ENCODE measurements at regions of chr14 and their contacts with region 1.

Region 1: GRCh38 chr14:96112032-96112431 is 72.9 kb downstream of the C14orf132 start:
- DNase-seq: no peak
- H3K4me3 ChIP-seq: no peak overlapping the region
- H3K27ac ChIP-seq: no peak overlapping the region
- H3K4me1 ChIP-seq: no peaks in the 10 kb centered on the region
- H3K27me3 ChIP-seq: no peaks in the 10 kb centered on the region
- CTCF ChIP-seq: no peak
- EP300 ChIP-seq: no peak
- POLR2A ChIP-seq: no peak

Region 2: GRCh38 chr14:96077983-96078658 is 33.9 kb before region 1 on chr14:
- intact Hi-C with region 1: loop called in 1 of 4 experiments (anchors 2 kb)
- DNase-seq: no peak
- H3K4me3 ChIP-seq: no peak overlapping the region
- H3K27ac ChIP-seq: no peak overlapping the region
- H3K4me1 ChIP-seq: no peaks in the 10 kb centered on the region
- H3K27me3 ChIP-seq: no peaks in the 10 kb centered on the region
- CTCF ChIP-seq: no peak
- EP300 ChIP-seq: no peak
- POLR2A ChIP-seq: no peak

Region 3: GRCh38 chr14:97592341-97592980 is 1480.4 kb after region 1 on chr14:
- intact Hi-C with region 1: no loop called
- DNase-seq: no peak
- H3K4me3 ChIP-seq: no peak overlapping the region
- H3K27ac ChIP-seq: no peak overlapping the region
- H3K4me1 ChIP-seq: no peaks in the 10 kb centered on the region
- H3K27me3 ChIP-seq: no peaks in the 10 kb centered on the region
- CTCF ChIP-seq: no peak
- EP300 ChIP-seq: no peak
- POLR2A ChIP-seq: no peak